ENCODE measurements at regions of chr18 and their contacts with region 1.

Region 1: DNA sequence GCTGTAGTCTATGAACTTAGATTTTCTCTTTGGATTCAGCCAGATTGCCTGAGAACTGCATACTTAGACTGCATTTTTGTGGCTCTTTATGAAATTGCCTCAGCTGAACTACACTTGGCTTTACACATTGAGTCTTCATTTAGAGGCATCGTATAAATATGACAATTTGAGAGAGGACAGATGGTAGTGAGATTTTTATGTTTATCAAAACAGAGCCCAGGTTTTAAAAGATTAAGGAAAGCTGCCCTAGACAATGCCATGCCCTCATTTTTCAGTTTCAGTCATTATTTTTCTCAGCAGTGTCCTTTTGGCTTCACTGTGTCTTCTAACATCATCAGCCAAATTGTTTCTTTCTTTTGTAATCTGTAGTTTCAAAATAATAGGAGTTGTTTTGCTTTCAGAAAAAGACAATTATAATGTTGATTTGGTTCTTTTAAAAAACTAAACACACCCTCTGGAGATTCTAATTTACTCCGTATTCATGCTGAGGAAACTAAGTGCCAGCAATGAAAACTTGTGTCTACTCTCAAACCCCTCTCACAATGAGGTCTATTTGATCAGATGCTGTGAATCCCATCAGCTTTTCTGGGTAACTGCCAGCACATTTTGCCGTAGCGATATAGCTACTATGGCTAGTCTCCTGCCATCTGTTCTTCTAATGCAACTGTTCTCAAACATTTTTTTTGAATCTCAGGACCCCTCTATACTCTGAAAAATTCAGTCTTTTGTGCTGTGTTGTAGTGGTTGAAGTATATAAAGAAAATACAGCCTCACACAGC is 46.2 kb downstream of the TWSG1 start:
- DNase-seq: peak in 1 of 10 donors; percentile 68
- H3K4me3 ChIP-seq: peak overlapping the region in 4 of 59 donors; percentile 3 to 24 (median 10)
- H3K27ac ChIP-seq: peak overlapping the region in 4 of 59 donors; percentile 33 to 84 (median 46)
- H3K27me3 ChIP-seq: no peaks in the 10 kb centered on the region
- CTCF ChIP-seq: no peak

Region 2: GRCh38 chr18:9433671-9434121 is 52.9 kb after region 1 on chr18:
- intact Hi-C with region 1: loop called in 1 of 2 experiments (anchors 10 kb)
- DNase-seq: no peak
- H3K4me3 ChIP-seq: peak overlapping the region in 4 of 59 donors; percentile 9 to 25 (median 12)
- H3K27ac ChIP-seq: peak overlapping the region in 1 of 59 donors; percentile 43
- H3K27me3 ChIP-seq: no peaks in the 10 kb centered on the region
- CTCF ChIP-seq: no peak

Measured in dorsolateral prefrontal cortex (tissue), 120 donors.